GM18951 (cell line): ENCODE measurements at regions of chr6 and their contacts with region 1.

Region 1: DNA sequence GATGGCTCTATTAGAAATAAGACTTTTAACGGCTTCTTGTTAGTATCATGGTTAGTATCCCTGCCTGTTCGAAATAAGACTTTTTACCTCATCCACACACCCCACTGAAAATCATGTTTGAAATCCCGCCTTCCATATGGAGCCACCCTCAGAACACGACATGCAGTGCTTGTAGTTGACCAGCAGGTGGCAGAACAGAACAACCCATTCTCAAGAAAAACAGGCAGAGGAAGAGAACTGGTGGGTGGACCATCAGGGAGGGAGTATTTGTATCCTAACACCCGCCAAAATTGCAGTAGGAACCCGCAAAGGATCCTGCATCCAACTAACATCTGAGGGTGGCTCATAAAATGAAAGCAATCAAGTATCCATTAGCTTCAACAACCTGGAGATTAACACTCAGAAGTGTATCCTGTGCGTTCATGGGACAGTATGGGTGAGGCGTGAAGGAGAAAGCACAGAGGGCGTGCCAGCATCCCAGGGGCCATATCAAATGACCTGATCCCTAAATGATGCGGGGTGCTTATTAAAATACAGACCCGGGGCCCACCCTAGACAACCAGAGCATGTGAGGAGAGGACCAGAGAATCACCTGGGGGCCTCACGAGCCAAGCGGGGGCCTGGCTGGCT is 89.6 kb upstream of the NHSL1 start:
- POLR2A ChIP-seq: no peak

Region 2: GRCh38 chr6:138765896-138766655 is 177.2 kb after region 1 on chr6:
- in situ Hi-C with region 1: loop called (anchors 5 kb)
- POLR2A ChIP-seq: no peak